H1 (cell line): ENCODE measurements at regions of chr12 and their contacts with region 1.

Region 1: DNA sequence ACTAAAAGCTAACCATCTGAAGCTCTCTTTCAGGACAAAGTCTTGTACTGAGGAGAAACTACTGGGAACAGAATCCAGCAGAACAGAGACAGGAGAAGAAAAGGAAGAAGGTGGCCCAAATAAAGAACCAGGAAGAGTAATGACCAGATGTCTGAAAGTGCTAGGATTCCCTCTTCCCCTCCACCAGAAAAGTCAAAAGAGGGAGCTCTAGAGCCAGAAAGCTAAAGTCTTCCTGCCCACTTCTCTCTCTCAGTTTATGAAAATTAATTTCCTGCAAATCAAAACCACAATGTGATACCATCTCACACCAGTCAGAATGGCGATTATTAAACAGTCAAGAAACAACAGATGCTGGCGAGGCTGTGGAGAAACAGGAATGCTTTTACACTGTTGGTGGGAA is 47.2 kb downstream of the SPPL3 start:
- DNase-seq: no peak
- H3K4me3 ChIP-seq: no peak overlapping the region
- H3K27ac ChIP-seq: no peak overlapping the region
- H3K4me1 ChIP-seq: no peaks in the 10 kb centered on the region
- H3K27me3 ChIP-seq: no peaks in the 10 kb centered on the region
- CTCF ChIP-seq: peak in 2 of 3 experiments; percentile 20 to 44; a peak in 2 of 4 replicates
- EP300 ChIP-seq: no peak
- POLR2A ChIP-seq: no peak
- RAD21 ChIP-seq: peak; percentile 9 to 41; a peak in 2 of 4 replicates

Region 2: DNA sequence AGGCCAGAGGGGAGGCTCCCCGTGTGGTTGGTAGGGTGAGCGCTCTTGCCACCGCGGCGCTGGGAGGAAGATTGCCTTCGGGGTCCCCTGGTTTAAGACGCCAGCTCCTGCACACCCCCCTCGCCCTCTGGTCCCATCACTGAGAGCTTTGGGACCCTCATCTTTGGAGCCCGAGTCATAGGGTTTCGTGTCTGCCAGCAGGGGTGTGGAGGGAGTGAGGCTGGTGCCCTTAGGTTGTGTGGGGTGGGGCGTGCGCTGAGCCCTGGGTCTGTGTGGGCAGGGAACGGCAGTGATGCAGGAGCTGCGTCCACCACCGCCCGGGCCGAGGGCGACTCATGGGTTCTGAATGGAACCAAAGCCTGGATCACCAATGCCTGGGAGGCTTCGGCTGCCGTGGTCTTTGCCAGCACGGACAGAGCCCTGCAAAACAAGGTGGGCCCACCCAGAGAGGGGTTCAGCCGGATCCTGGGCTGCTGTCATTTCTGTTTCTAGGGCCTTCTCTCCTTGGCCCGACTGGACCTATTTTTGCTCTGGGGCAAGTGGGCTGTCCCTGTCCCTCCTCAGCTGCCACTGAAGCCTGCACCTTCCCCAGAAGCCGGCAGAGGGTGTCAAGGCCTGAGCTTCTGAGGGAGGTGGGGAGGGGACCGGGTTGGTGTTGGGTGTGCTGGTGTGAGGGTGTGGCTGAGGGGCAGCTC is 119.3 kb before region 1 on chr12:
- CTCF ChIA-PET with region 1: no interaction called
- POLR2A ChIA-PET with region 1: no interaction called
- DNase-seq: peak in 1 of 2 experiments; percentile 68
- H3K4me3 ChIP-seq: no peak overlapping the region
- H3K27ac ChIP-seq: no peak overlapping the region
- H3K4me1 ChIP-seq: no peaks in the 10 kb centered on the region
- H3K27me3 ChIP-seq: no peaks in the 10 kb centered on the region
- CTCF ChIP-seq: peak; percentile 53 to 70 (median 61)
- EP300 ChIP-seq: no peak
- POLR2A ChIP-seq: no peak
- RAD21 ChIP-seq: peak; percentile 74 to 82

Region 3: GRCh38 chr12:120870415-120870814 is 13.4 kb after region 1 on chr12:
- CTCF ChIA-PET with region 1: interaction called, 14 read pairs
- POLR2A ChIA-PET with region 1: interaction called, 3 read pairs
- DNase-seq: no peak
- H3K4me3 ChIP-seq: no peak overlapping the region
- H3K27ac ChIP-seq: no peak overlapping the region
- H3K4me1 ChIP-seq: no peaks in the 10 kb centered on the region
- H3K27me3 ChIP-seq: no peaks in the 10 kb centered on the region
- CTCF ChIP-seq: no peak
- EP300 ChIP-seq: no peak
- POLR2A ChIP-seq: no peak
- RAD21 ChIP-seq: no peak